ENCODE measurements at regions of chr2 and their contacts with region 1.

Region 1: GRCh38 chr2:223993621-223994232 is 36.5 kb downstream of the MRPL44 start:
- DNase-seq: peak in 5 of 10 donors; percentile 33 to 69 (median 62)

Region 2: GRCh38 chr2:223846525-223846924 is 147.2 kb before region 1 on chr2:
- intact Hi-C with region 1: no loop called
- DNase-seq: no peak

Region 3: DNA sequence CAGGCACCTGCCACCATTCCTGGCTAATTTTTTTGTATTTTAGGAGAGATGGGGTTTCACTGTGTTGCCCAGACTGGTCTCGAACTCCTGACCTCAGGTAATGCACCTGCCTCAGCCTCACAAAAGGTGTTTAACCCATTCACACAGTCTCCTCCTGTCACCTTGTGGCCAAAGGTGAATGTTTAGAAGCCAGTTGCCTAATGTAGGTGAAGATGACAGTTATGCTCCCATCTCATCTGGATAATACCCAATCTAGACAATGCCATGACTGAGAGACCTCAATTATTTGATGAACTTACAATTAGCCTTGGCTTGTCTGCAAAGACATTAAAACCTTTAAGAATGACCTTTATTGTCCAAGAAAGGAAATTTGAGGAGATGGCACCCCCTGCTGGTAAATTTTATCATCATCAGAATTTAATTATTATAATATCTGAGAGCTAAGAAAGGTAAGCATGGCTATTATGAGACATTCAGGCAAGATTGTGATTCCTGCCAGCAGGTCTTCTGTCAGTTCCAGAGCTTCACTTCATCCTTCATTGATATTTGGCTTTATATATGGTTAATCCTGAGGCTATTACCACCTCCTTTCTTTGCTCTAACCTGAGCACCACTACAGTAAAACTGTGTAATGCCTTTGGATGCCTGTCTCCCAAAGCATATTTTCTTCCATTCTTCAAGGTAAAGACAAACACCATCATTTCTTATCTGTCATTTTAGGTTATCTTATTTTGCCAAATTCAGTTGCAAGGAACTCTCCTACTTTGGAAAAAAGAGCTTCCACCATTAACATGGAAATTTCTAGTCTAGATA is 290.6 kb after region 1 on chr2:
- intact Hi-C with region 1: loop called (anchors 1 kb)
- DNase-seq: no peak